ENCODE measurements at regions of chr7 and their contacts with region 1.

Region 1: GRCh38 chr7:116588641-116589594 is 64.1 kb downstream of the CAV1 start:
- DNase-seq: no peak
- ATAC-seq: peak; percentile 73

Region 2: GRCh38 chr7:116258734-116259133 is 330.2 kb before region 1 on chr7:
- intact Hi-C with region 1: loop called (anchors 5 kb)
- DNase-seq: no peak
- ATAC-seq: peak; percentile 68

Region 3: GRCh38 chr7:116525913-116526861 is 62.7 kb before region 1 on chr7:
- intact Hi-C with region 1: loop called (anchors 10 kb)
- DNase-seq: peak; percentile 84
- ATAC-seq: peak; percentile 85

Region 4: DNA sequence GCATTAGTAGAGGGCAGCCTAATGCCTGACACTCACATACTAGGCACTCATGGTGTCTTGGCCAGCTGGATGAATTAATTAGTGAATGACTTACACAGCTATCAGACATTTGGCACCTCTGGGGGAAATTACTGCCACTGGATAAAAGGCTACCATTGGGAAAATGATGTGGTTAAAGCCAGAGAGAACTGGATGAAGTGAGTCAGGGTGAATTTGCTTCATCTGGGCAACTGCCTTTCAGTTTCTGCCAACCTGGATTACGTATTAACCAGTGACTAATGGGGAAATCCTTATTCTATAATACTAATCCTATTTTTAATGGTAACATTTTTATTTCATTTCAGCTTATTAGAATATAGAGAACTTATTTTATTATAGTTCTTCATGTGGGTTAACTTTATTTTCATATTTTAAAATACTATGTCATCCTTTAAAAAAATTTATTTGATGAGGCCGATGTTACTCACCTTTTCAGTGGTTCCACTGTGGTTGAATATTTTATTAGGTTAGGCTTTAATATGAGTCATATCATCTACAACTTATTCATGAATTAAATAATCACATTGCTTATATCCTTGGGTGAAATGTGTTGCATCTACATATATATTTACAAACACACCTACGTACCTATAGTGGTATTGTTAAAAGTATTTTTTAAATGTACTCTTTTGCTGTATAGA is 187.8 kb after region 1 on chr7:
- intact Hi-C with region 1: no loop called
- DNase-seq: no peak
- ATAC-seq: no peak

Region 5: GRCh38 chr7:118195837-118196474 is 1607.0 kb after region 1 on chr7:
- intact Hi-C with region 1: no loop called
- DNase-seq: no peak
- ATAC-seq: peak; percentile 74

Measured in sciatic nerve (tissue), 2 donors.